Right ventricle myocardium superior (tissue), 1 donor: ENCODE measurements at regions of chr2 and their contacts with region 1.

Region 1: DNA sequence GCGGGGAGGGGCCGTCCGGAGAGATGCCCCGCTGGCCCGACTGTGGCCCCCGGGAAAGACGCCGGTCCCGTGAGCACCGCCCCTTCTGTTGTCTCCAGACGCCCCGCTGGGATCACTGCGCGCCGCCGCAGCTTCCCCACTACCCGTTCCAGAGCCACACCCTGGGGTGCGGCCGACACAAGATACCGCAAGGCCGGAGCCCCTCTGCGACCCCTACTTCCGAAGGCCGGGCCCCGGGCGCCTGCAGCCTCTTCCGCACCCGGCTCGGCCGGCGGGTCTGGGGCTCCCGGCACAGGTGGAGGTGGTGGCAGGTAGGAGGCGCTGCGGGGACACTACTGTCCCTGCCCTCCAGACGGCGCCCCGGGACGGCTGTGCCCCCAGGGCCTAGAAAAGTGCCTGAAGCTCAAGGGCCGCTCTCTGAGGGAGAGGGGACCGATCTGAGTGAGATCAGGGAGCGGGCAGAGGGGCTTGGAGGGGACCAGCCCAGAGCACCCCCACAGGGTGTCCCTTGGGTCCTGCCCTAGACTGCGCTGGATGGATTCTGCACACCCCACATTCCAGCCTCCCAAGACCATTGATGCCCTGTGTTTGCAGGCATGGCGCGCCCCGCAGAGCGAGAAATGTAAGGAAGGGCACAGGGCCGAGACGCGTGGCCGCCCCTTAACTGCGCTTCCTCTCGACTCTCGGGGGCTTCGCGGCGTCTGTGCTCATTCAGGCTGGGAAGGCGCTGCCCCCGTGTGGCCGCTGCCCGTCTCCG is 80.0 kb downstream of the GFPT1 start:
- DNase-seq: peak; percentile 91
- ATAC-seq: peak; percentile 92

Region 2: GRCh38 chr2:68943581-68944568 is 363.1 kb before region 1 on chr2:
- intact Hi-C with region 1: loop called (anchors 5 kb)
- DNase-seq: peak; percentile 47
- ATAC-seq: peak; percentile 82

Region 3: GRCh38 chr2:69012310-69013141 is 294.5 kb before region 1 on chr2:
- intact Hi-C with region 1: loop called (anchors 5 kb)
- DNase-seq: peak; percentile 85
- ATAC-seq: peak; percentile 79

Region 4: GRCh38 chr2:69026026-69026425 is 281.0 kb before region 1 on chr2:
- intact Hi-C with region 1: loop called (anchors 2 kb)
- DNase-seq: no peak
- ATAC-seq: peak; percentile 84

Region 5: GRCh38 chr2:69375494-69376353 is 68.7 kb after region 1 on chr2:
- intact Hi-C with region 1: no loop called
- DNase-seq: no peak
- ATAC-seq: peak; percentile 81